ENCODE measurements at regions of chr20 and their contacts with region 1.

Region 1: GRCh38 chr20:36460648-36461599 is 80.4 kb upstream of the MYL9 start:
- DNase-seq: peak; percentile 89
- ATAC-seq: peak; percentile 63
- H3K4me3 ChIP-seq: peak overlapping the region in 2 of 3 experiments; percentile 71 to 90; a peak in 4 of 6 replicates
- H3K27ac ChIP-seq: peak overlapping the region; percentile 57
- H3K4me1 ChIP-seq: peaks cover 52% of the 10 kb centered on the region
- H3K27me3 ChIP-seq: no peaks in the 10 kb centered on the region; a peak in 1 of 5 replicates
- CTCF ChIP-seq: peak; percentile 31; the same call in 1 of the 2 replicates
- EP300 ChIP-seq: peak; percentile 39 to 55; a peak in 2 of 4 replicates
- POLR2A ChIP-seq: peak; percentile 76 to 83
- RAD21 ChIP-seq: peak; percentile 61

Region 2: GRCh38 chr20:36472637-36473081 is 11.7 kb after region 1 on chr20:
- CTCF ChIA-PET with region 1: no interaction called
- POLR2A ChIA-PET with region 1: interaction called, 13 read pairs
- in situ Hi-C with region 1: no loop called
- intact Hi-C with region 1: no loop called
- DNase-seq: no peak
- ATAC-seq: peak; percentile 20
- H3K4me3 ChIP-seq: no peak overlapping the region
- H3K27ac ChIP-seq: peak overlapping the region; percentile 24
- H3K4me1 ChIP-seq: peaks cover 73% of the 10 kb centered on the region
- H3K27me3 ChIP-seq: no peaks in the 10 kb centered on the region
- CTCF ChIP-seq: no peak
- EP300 ChIP-seq: no peak
- POLR2A ChIP-seq: no peak
- RAD21 ChIP-seq: no peak

Measured in HepG2 (cell line).